Panc1 (cell line): ENCODE measurements at regions of chrX and their contacts with region 1.

Region 1: DNA sequence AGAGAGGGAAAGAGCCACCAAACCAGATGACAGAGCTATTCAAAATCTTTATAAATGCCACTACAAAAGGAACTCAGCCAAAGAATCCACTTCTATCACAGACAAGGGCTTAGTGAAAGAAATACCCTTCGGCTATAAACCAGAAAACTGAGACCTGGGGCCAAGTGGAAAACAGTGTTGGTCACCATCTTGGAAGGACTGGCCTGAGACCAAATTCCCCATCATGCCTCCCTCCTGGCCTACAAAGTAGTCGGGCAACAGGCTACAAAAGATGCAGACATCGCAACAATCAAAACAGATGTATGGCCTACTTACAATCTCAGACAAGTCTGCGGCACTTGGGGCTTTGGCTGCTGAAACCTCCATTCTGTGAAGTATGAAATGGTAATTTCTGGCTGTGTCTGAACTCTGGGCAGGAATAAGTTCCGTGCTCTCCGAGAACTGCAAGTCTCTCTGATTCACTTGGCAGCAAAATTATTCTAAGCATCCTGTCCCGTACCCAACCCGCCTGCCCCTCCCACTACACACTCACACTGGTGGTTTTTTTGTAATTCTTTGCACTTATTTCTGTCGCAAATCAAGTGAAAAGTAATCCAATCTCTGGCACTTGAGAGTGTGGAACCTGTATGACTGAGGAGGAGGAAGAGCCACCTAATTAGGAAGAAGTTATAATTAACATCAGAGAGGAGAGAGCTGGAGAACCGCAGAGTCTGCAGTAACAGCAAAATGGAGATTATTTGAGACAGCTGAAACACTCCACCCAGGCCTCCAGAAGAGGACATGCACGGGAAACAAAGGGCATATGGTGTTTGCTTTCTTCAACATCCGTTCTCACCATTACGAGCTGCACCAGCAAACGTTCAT is 87.8 kb downstream of the SH3KBP1 start:
- DNase-seq: no peak
- ATAC-seq: no peak
- H3K4me3 ChIP-seq: no peak overlapping the region
- H3K27ac ChIP-seq: no peak overlapping the region
- H3K4me1 ChIP-seq: no peaks in the 10 kb centered on the region
- H3K27me3 ChIP-seq: no peaks in the 10 kb centered on the region
- CTCF ChIP-seq: no peak

Region 2: GRCh38 chrX:19758539-19758938 is 41.0 kb before region 1 on chrX:
- CTCF ChIA-PET with region 1: no interaction called
- POLR2A ChIA-PET with region 1: no interaction called
- in situ Hi-C with region 1: no loop called
- intact Hi-C with region 1: no loop called
- DNase-seq: no peak
- ATAC-seq: no peak
- H3K4me3 ChIP-seq: no peak overlapping the region
- H3K27ac ChIP-seq: no peak overlapping the region
- H3K4me1 ChIP-seq: no peaks in the 10 kb centered on the region
- H3K27me3 ChIP-seq: no peaks in the 10 kb centered on the region
- CTCF ChIP-seq: no peak

Region 3: GRCh38 chrX:19875050-19875431 is 75.5 kb after region 1 on chrX:
- CTCF ChIA-PET with region 1: no interaction called
- POLR2A ChIA-PET with region 1: interaction called, 13 read pairs
- in situ Hi-C with region 1: no loop called
- intact Hi-C with region 1: no loop called
- DNase-seq: no peak
- ATAC-seq: peak; percentile 84
- H3K4me3 ChIP-seq: no peak overlapping the region
- H3K27ac ChIP-seq: no peak overlapping the region
- H3K4me1 ChIP-seq: no peaks in the 10 kb centered on the region
- H3K27me3 ChIP-seq: no peaks in the 10 kb centered on the region
- CTCF ChIP-seq: no peak